ENCODE measurements at regions of chr3 and their contacts with region 1.

Region 1: DNA sequence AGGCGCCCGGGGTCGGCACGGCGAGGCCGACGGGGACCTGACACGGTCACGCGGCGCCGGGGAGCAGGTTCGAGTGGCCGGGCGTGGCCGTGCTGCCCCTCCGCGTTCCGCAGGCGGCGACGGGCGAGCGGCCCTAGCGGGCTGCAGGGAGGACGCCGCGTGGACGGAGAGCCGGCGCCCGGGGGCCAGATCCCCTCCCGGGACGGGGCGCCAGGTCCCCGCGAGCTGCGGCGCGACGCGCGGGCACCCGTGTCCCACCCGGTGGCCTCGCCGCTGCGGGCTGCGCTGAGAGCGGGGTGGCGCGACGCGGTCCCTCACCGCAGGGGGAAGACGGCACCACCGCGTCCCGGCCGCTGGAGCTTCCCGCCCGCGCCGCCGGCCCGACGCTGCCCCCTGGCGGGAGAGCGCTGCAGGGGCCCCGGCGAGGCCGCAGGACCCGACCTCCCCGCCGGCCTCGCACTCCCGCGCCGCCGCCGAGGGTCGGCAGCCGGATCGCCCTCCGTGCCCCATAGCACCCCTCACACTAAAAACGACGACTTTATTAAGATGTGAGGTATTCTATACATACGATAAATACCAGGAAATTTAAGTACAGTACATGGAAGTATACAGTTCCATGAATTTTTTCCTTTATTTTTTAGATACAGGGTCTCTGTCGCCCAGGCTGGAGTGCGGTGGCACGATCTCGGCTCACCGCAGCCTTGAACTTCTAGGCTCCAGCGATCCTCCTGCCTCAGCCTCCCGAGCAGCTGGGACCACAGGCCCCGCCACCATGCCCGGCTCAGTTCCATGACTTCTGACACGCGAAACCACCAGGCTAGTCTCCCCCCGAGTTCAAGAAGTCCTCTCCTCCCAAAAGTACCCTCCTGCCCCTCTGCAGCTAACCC is 1.3 kb upstream of the PIGZ start:
- DNase-seq: peak; percentile 89
- ATAC-seq: peak; percentile 61
- H3K4me3 Mint-ChIP-seq: peak overlapping the region; percentile 82
- H3K27ac Mint-ChIP-seq: peak overlapping the region; percentile 72
- H3K4me1 Mint-ChIP-seq: peaks cover 14% of the 10 kb centered on the region
- H3K27me3 Mint-ChIP-seq: peaks cover 21% of the 10 kb centered on the region

Region 2: GRCh38 chr3:196942226-196942914 is 27.5 kb before region 1 on chr3 and contains the start of gene NCBP2:
- POLR2A ChIA-PET with region 1: interaction called, 17 read pairs
- DNase-seq: peak; percentile 100
- ATAC-seq: peak; percentile 95
- H3K4me3 Mint-ChIP-seq: peak within 1 kb of the TSS; percentile 98
- H3K27ac Mint-ChIP-seq: peak within 1 kb of the TSS; percentile 94
- H3K4me1 Mint-ChIP-seq: peaks cover 34% of the 10 kb centered on the region
- H3K27me3 Mint-ChIP-seq: no peaks in the 10 kb centered on the region
- total RNA-seq, gene NCBP2: 53.0 to 55.8 TPM

Region 3: GRCh38 chr3:196954832-196955231 is 15.1 kb before region 1 on chr3:
- POLR2A ChIA-PET with region 1: no interaction called
- DNase-seq: no peak
- ATAC-seq: no peak
- H3K4me3 Mint-ChIP-seq: no peak overlapping the region
- H3K27ac Mint-ChIP-seq: no peak overlapping the region
- H3K4me1 Mint-ChIP-seq: no peaks in the 10 kb centered on the region
- H3K27me3 Mint-ChIP-seq: peaks cover 21% of the 10 kb centered on the region

Region 4: GRCh38 chr3:197002701-197003454 is 33.0 kb after region 1 on chr3:
- POLR2A ChIA-PET with region 1: no interaction called
- DNase-seq: peak; percentile 90
- ATAC-seq: peak; percentile 78
- H3K4me3 Mint-ChIP-seq: no peak overlapping the region
- H3K27ac Mint-ChIP-seq: no peak overlapping the region
- H3K4me1 Mint-ChIP-seq: peaks cover 9% of the 10 kb centered on the region
- H3K27me3 Mint-ChIP-seq: peaks cover 1% of the 10 kb centered on the region